Adrenal gland (tissue), 19 donors: ENCODE measurements at regions of chr4 and their contacts with region 1.

Region 1: DNA sequence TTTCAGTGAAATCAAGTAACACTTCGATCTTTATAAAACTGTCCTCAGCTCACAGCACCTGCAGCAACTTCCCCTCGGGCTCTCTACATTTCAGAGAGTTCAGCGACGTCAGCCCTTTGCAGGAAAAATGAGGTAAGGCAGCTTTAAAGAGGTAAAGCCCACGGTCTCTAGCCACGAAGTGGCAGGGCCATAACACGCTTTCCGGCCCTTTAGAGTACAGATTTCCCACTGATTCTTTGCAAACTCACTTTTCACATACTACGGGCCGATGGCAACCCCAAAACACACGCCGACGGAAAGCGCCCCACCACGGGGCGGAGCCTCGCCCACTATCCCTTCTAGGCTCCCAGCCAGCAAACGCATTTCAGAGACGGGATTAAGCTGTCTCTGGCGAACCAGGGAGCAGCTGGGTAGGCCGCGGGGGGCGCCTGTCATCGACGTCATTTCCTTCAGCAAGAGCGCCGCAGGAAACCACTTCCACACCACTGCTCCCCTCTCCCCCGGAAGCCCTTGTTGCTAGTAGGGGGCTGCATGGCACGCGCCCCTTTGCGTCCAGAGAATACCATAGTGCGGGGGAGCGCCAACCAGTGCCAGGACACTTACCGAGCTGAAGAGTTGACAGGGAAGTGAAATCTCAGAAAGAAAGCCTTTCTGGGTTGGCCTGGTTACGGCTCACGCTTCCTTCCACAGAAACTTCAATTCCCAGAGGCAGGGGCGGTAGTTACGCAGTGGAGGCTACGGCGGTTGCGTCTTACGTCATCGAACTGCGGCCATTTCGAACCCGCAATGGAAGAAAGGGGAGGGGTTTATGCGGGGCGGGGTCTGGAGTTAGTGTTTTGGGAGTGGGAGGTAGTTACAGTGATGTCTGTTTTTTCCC is at the start of gene TRMT10A:
- DNase-seq: peak; percentile 96 to 99 (median 99)
- H3K4me3 ChIP-seq: peak within 1 kb of the TSS; percentile 48 to 74 (median 62)
- H3K27ac ChIP-seq: peak within 1 kb of the TSS; percentile 93 to 97 (median 97)
- H3K4me1 ChIP-seq: peaks cover 4 to 5% of the 10 kb centered on the region in 2 donors
- H3K27me3 ChIP-seq: no peaks in the 10 kb centered on the region
- CTCF ChIP-seq: peak in 3 of 6 experiments; percentile 18 to 31 (median 28)
- POLR2A ChIP-seq: peak; percentile 64 to 77
- total RNA-seq, gene TRMT10A: 2.1 to 20.4 (median 6.4) TPM

Region 2: GRCh38 chr4:99300934-99301333 is 262.6 kb before region 1 on chr4:
- intact Hi-C with region 1: no loop called
- DNase-seq: peak; percentile 24 to 78 (median 58)
- H3K4me3 ChIP-seq: no peak overlapping the region
- H3K27ac ChIP-seq: peak overlapping the region in 1 of 5 donors; percentile 34
- H3K4me1 ChIP-seq: no peaks in the 10 kb centered on the region
- H3K27me3 ChIP-seq: no peaks in the 10 kb centered on the region
- CTCF ChIP-seq: no peak
- POLR2A ChIP-seq: no peak

Region 3: GRCh38 chr4:99722006-99722405 is 158.5 kb after region 1 on chr4:
- intact Hi-C with region 1: no loop called
- DNase-seq: no peak
- H3K4me3 ChIP-seq: no peak overlapping the region
- H3K27ac ChIP-seq: peak overlapping the region in 1 of 5 donors; percentile 82
- H3K4me1 ChIP-seq: peaks cover 19 to 24% of the 10 kb centered on the region in 2 donors
- H3K27me3 ChIP-seq: no peaks in the 10 kb centered on the region
- CTCF ChIP-seq: no peak
- POLR2A ChIP-seq: no peak

Region 4: GRCh38 chr4:99808260-99808857 is 244.8 kb after region 1 on chr4:
- intact Hi-C with region 1: loop called (anchors 5 to 10 kb)
- DNase-seq: peak; percentile 44 to 83 (median 62)
- H3K4me3 ChIP-seq: no peak overlapping the region
- H3K27ac ChIP-seq: no peak overlapping the region
- H3K4me1 ChIP-seq: no peaks in the 10 kb centered on the region
- H3K27me3 ChIP-seq: no peaks in the 10 kb centered on the region
- CTCF ChIP-seq: peak; percentile 43 to 75 (median 72)
- POLR2A ChIP-seq: no peak

Region 5: DNA sequence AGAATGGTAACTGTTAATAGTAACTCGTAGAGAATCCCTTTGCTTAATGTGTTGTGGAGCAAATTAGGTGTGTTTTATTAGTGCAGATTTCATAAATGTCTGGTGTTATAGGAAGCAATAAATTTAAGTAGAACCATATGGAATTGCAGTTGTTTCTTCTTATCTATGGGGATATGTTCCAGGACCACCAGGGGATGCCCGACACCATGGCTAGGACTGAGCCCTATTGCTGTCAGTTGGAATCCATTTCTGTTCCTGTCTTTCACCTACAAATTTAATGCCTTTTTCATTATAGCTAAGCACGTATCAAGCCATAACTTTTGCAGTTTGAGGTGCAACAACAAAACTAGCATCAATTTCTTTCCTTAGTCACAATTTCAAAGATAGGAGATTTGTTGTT is 554.2 kb after region 1 on chr4:
- intact Hi-C with region 1: no loop called
- DNase-seq: no peak
- H3K4me3 ChIP-seq: no peak overlapping the region
- H3K27ac ChIP-seq: no peak overlapping the region
- H3K4me1 ChIP-seq: peaks cover 0 to 11% of the 10 kb centered on the region in 2 donors
- H3K27me3 ChIP-seq: no peaks in the 10 kb centered on the region
- CTCF ChIP-seq: no peak
- POLR2A ChIP-seq: no peak